ENCODE measurements at regions of chr2 and their contacts with region 1.

Region 1: DNA sequence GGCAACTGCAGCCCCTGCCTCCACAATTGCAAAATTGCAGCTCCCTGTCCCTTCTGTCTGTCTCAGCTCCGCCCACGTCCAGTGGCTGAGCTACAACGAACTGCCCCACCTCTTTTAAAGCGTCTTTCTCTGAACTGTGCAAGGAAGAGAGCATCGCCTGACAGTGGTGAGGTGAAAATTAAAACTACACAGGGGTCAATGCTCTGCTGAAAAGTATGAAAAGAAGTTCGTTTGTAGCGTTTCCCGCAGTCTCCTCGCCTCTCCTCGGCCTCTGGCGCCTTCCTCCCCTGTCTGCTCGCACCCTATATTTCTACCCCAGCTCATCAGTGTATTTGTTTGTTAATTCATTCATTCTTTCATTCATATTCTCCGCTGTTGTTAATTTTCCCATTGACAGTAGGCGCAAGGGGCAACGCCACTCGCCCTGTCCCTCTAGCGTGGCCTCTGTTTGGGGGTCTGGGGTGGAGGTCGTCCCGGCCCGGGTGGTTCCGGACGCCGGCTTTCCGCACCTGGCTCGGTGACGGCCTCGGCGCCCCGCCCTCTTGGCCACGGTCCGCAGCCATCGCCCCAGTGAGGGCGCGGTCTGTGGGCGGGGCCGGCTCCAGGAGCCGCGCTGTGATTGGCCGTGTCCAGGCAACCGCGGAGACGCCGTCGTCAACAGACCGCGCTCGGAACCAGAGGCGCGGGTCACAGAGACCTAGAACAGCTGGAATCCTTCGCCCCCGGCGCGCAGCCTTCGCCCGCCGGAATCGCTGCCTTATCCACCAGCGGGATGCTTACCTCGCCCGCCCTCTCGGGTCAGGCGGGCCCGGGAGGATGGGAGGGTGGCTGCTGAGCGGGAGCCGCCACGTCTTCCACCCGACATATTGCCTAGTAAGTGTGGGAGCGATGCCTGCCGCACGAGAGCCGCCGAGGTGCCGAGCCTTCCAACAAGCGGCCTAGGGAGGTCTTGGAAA is at the start of gene VWA3B:
- H3K4me3 Mint-ChIP-seq: peak within 1 kb of the TSS; percentile 66
- H3K27ac Mint-ChIP-seq: peak within 1 kb of the TSS; percentile 39
- H3K4me1 Mint-ChIP-seq: peaks cover 71% of the 10 kb centered on the region
- H3K27me3 Mint-ChIP-seq: peaks cover 46% of the 10 kb centered on the region

Region 2: GRCh38 chr2:98012561-98012991 is 74.2 kb before region 1 on chr2:
- intact Hi-C with region 1: loop called (anchors 5 kb)
- H3K4me3 Mint-ChIP-seq: no peak overlapping the region
- H3K27ac Mint-ChIP-seq: no peak overlapping the region
- H3K4me1 Mint-ChIP-seq: peaks cover 63% of the 10 kb centered on the region
- H3K27me3 Mint-ChIP-seq: peaks cover 49% of the 10 kb centered on the region

Region 3: DNA sequence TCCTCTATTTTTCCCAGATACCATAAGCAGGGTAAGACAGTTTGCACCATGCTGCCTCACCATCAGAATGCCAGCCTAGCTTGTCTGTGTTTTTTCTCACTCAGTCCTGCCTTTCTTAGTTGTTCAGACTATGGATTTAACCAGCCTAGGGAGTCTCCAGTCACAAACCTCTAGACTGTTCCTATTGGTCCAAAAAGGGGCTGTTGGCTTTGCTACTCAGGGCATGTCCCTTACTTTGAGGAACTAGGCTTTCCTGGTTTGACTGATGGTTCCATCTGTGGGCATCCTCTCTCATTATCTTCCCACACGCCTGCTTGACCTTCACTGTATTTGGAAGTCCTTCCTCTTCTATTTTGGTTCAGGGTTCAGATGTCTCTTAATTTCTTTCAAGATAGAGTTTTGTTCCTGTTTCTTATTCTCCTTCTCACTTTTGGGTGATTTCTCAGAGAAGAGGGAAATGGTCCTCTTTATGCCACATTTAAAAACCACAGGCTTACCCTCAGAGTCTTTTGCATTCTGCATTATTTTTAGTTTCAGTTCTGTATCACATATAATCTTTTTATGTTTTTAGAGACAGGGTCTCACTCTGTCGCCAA is 59.7 kb before region 1 on chr2:
- intact Hi-C with region 1: loop called (anchors 1 kb)
- H3K4me3 Mint-ChIP-seq: peak overlapping the region; percentile 15
- H3K27ac Mint-ChIP-seq: peak overlapping the region; percentile 47
- H3K4me1 Mint-ChIP-seq: peaks cover 45% of the 10 kb centered on the region
- H3K27me3 Mint-ChIP-seq: peaks cover 84% of the 10 kb centered on the region

Region 4: GRCh38 chr2:98050070-98050469 is 36.7 kb before region 1 on chr2:
- intact Hi-C with region 1: no loop called
- H3K4me3 Mint-ChIP-seq: no peak overlapping the region
- H3K27ac Mint-ChIP-seq: no peak overlapping the region
- H3K4me1 Mint-ChIP-seq: no peaks in the 10 kb centered on the region
- H3K27me3 Mint-ChIP-seq: peaks cover 81% of the 10 kb centered on the region

Region 5: DNA sequence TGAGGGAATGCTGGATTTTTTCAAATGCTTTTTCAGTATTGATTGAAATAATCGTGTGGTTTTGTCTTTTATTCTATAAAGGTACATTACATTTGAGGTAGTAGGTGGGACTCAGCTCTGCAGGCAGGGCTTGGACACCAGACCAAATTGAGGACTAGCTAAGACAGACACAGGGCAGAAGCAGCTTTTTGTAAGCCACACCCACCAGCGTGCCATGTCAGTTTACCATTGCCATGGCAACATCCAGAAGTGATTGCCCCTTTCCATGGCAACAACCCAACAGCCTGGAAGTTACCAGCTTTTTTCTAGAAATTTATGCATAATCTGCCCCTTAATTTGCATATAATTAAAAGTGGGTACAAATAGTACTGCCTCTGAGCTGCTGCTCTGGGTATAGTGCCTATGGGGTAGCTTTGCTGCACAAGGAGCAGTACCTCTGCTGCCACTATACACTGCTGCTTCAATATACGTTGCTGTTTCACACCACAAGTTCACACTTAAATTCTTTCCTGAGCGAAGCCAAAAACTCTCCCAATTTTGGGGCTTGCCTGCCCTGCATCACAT is 23.4 kb before region 1 on chr2:
- intact Hi-C with region 1: no loop called
- H3K4me3 Mint-ChIP-seq: no peak overlapping the region
- H3K27ac Mint-ChIP-seq: no peak overlapping the region
- H3K4me1 Mint-ChIP-seq: no peaks in the 10 kb centered on the region
- H3K27me3 Mint-ChIP-seq: peaks cover 78% of the 10 kb centered on the region

Region 6: GRCh38 chr2:98114643-98115330 is 28.0 kb after region 1 on chr2:
- intact Hi-C with region 1: no loop called
- H3K4me3 Mint-ChIP-seq: no peak overlapping the region
- H3K27ac Mint-ChIP-seq: no peak overlapping the region
- H3K4me1 Mint-ChIP-seq: peaks cover 5% of the 10 kb centered on the region
- H3K27me3 Mint-ChIP-seq: peaks cover 75% of the 10 kb centered on the region

Region 7: GRCh38 chr2:98134172-98135005 is 47.6 kb after region 1 on chr2:
- intact Hi-C with region 1: loop called (anchors 5 kb)
- H3K4me3 Mint-ChIP-seq: no peak overlapping the region
- H3K27ac Mint-ChIP-seq: no peak overlapping the region
- H3K4me1 Mint-ChIP-seq: peaks cover 37% of the 10 kb centered on the region
- H3K27me3 Mint-ChIP-seq: peaks cover 83% of the 10 kb centered on the region

Region 8: DNA sequence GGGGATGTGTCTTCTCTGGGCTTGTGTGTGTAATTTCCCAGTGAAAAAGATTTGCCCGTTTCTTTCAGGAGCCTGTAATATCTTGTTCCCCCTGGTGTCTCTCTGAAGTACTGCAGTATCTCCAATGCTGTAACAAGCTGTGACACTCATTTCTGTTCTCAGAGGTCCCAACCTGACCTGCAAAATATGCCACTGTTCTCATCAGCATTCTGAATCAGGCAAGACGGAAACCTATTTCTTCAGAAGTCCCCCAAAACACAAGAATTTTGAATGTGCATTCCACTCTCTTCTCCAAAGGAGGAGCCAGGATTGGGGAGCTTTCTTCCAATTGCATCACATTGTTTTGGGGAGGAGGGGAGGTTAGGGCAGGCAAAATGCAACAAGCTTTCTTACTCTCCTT is 182.5 kb after region 1 on chr2:
- intact Hi-C with region 1: loop called (anchors 10 kb)
- H3K4me3 Mint-ChIP-seq: no peak overlapping the region
- H3K27ac Mint-ChIP-seq: no peak overlapping the region
- H3K4me1 Mint-ChIP-seq: no peaks in the 10 kb centered on the region
- H3K27me3 Mint-ChIP-seq: peaks cover 42% of the 10 kb centered on the region

Region 9: DNA sequence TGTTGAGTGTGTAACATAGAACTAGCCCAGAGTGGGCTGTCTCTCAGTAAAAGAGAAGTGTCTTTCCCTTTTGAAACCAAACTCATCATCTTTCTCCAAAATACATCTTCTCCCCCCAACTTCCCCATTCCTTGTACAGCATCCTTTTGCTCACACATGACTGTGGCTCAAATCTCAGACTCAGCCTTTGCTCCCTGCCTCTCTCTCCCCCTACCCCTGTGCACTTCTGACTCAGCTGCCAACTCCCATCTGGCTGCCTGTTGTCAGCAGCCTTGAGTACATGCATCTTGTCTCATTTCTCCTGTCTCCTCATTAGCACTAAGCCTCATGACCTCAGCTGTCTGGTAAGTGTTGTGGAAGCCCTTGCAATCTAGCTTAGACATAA is 662.3 kb after region 1 on chr2:
- intact Hi-C with region 1: no loop called
- H3K4me3 Mint-ChIP-seq: peak overlapping the region; percentile 69
- H3K27ac Mint-ChIP-seq: peak overlapping the region; percentile 98
- H3K4me1 Mint-ChIP-seq: peaks cover 73% of the 10 kb centered on the region
- H3K27me3 Mint-ChIP-seq: no peaks in the 10 kb centered on the region